ENCODE measurements at regions of chr12 and their contacts with region 1.

Region 1: DNA sequence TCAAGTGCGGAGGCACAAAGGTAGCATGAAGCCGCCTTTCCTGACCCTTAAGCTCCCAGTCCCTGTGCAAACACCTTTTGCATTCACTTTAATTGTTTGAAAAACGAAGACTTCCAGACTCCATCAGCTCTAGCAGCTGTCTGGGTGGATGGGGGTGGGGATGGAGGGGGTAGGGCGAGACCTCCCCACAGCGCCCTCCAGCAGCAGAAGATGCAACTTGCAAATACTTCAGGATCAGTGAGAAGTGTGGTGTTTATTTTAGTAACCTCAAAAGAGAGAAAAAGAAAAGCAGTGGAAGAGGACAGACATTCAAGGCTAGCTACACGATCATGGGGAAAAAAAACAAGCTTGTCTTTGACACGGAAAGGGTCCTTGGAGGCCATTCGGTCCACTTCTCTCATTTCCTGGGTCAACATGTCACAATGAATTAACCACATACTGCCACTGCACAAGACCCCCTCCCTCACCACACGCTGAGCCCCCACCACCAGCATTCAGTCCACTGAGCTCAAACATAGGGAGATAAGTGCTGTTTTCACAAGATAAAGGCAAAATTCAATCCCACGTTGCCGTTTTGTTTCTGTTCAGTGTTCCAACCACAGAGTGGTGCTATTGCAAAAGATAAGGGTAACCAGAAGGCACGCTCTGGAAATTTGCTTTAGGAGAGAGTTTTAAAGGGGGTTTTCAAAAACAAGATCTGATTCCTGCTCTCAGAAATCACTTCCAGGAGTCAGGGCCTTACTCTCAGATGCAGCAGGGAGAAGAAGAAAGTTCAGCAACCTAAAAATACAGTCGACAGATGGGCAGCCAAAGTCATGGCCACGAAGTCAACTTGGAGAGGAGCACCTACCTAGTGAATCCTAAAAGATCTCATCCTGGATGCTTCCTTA is 3.3 kb upstream of the NTF3 start:
- DNase-seq: no peak
- H3K4me3 ChIP-seq: no peak overlapping the region
- H3K27ac ChIP-seq: no peak overlapping the region
- H3K4me1 ChIP-seq: peaks cover 40% of the 10 kb centered on the region
- H3K27me3 ChIP-seq: no peaks in the 10 kb centered on the region
- CTCF ChIP-seq: peak; percentile 27 to 55 (median 44)
- POLR2A ChIP-seq: no peak

Region 2: GRCh38 chr12:5650829-5651461 is 222.4 kb after region 1 on chr12:
- intact Hi-C with region 1: loop called (anchors 5 kb)
- DNase-seq: no peak
- H3K4me3 ChIP-seq: no peak overlapping the region
- H3K27ac ChIP-seq: no peak overlapping the region
- H3K4me1 ChIP-seq: no peaks in the 10 kb centered on the region
- H3K27me3 ChIP-seq: no peaks in the 10 kb centered on the region
- CTCF ChIP-seq: no peak
- POLR2A ChIP-seq: no peak